MCF 10A (cell line): ENCODE measurements at regions of chr2 and their contacts with region 1.

Region 1: DNA sequence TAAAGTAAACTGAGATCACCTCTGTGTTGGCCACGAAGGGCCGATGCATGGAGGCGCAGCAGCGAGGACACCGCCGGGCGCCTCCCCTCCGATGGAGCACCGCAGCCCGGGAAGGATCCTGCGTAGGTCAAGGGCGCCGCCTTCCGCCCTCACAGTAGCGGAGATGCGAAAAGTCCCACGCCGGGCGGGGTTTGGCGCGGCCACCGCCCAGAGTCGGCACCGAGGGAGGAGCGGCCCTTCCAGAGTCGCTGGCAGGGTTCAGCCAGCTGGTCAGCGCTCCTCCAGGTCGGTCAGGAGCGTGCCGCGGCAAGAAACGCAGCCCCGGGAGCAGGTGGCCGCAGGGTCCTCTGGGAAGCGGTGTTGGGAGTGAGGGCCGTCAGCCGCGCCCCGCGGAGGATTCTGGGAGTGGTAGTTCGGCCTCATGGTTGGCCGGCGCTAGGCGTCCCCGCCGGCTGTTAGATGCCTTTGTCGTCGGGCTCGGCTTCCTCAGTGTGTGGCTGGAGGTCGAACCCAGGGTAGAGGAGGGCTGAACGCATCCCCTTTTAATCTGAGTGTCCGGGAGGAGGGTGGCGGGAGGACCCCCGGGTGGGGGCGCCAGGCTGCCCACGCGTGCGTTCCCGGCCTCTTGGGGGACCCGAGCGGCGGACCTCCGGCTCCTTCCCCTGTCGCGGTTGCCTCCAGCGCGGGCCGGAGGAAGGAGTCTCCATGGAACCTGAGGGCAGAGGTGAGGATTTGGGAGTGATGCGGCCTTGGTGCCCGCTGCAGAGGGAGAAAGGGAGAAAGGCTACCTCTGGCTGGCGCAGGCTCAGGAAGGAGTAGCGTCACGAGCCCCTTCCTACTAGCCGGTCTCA is at the start of gene ZNF892:
- DNase-seq: peak; percentile 94
- H3K4me3 Mint-ChIP-seq: peak within 1 kb of the TSS; percentile 90
- H3K27ac Mint-ChIP-seq: peak within 1 kb of the TSS; percentile 95
- H3K4me1 Mint-ChIP-seq: peaks cover 16% of the 10 kb centered on the region
- H3K27me3 Mint-ChIP-seq: no peaks in the 10 kb centered on the region
- CTCF ChIP-seq: peak; percentile 61
- total RNA-seq, gene ZNF892: 10.2 and 10.3 TPM in 2 replicates

Region 2: GRCh38 chr2:95165129-95166064 is 41.9 kb before region 1 on chr2 and contains the start of gene ZNF2:
- CTCF ChIA-PET with region 1: interaction called, 4 read pairs
- POLR2A ChIA-PET with region 1: interaction called, 11 read pairs
- intact Hi-C with region 1: loop called (anchors 1 kb)
- DNase-seq: peak; percentile 99
- H3K4me3 Mint-ChIP-seq: peak within 1 kb of the TSS; percentile 100
- H3K27ac Mint-ChIP-seq: peak within 1 kb of the TSS; percentile 98
- H3K4me1 Mint-ChIP-seq: peaks cover 21% of the 10 kb centered on the region
- H3K27me3 Mint-ChIP-seq: no peaks in the 10 kb centered on the region
- CTCF ChIP-seq: no peak
- total RNA-seq, gene ZNF2: 4.1 and 4.4 TPM in 2 replicates